Esophagus muscularis mucosa (tissue), 4 donors: ENCODE measurements at regions of chr11 and their contacts with region 1.

Region 1: DNA sequence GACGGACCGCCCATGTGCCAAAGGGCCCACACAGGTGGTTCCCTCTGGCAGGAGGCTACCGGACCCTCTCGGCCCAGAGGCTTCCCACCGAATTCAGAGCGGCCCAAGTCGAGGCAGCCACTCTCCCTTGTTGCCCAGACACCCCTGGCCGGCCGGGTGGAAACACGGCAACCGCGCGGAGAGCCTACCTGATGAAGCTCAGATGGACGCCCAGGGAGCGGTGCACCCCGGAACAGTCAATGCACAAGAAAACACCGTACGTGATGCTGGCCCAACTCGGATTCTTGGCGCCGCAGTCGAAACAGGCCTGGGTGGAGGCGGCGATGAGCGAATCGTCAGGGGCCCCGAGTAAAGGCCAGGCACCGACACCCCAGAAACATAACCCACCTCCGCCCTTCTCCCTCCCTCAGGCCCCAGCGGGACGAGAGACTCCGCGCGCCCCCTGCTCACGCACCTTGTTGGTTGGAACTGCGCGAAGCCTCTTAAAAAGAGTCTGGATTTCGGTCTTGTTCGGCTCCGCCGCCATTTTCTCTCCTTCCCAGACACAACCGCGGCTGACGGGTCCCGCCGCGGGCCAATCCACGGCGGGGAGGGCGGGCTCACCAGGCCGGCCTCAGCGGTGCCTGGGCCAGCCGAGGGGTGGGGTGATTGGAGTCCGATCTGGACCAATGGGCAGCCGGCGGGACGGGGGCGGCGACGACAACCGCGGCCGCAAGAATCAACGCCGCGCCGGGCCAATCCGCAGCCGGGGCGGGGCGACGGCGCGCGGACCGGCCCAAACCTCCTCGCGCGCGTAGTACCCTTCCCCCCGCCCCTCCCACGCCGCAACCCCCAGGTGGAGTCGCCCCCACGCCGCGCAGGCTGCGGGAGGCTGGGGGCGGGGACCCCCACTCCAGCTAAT is at the start of gene ARFGAP2:
- DNase-seq: peak; percentile 99
- H3K4me3 ChIP-seq: peak within 1 kb of the TSS; percentile 72 to 99 (median 86)
- H3K27ac ChIP-seq: peak within 1 kb of the TSS; percentile 98 to 99 (median 98)
- H3K4me1 ChIP-seq: peaks cover 57 to 68% (median 65%) of the 10 kb centered on the region in 4 donors
- H3K27me3 ChIP-seq: no peaks in the 10 kb centered on the region
- CTCF ChIP-seq: no peak
- EP300 ChIP-seq: no peak
- POLR2A ChIP-seq: no peak
- total RNA-seq, gene ARFGAP2: 92.5 to 141 (median 120) TPM

Region 2: GRCh38 chr11:47269002-47269828 is 92.6 kb after region 1 on chr11:
- intact Hi-C with region 1: loop called (anchors 5 kb)
- DNase-seq: peak; percentile 95
- H3K4me3 ChIP-seq: peak overlapping the region; percentile 72 to 93 (median 81)
- H3K27ac ChIP-seq: peak overlapping the region; percentile 90 to 98 (median 96)
- H3K4me1 ChIP-seq: peaks cover 39 to 48% (median 46%) of the 10 kb centered on the region in 4 donors
- H3K27me3 ChIP-seq: no peaks in the 10 kb centered on the region
- CTCF ChIP-seq: peak in 1 of 3 experiments; percentile 29
- EP300 ChIP-seq: no peak
- POLR2A ChIP-seq: no peak